ENCODE measurements at regions of chr1 and their contacts with region 1.

Region 1: GRCh38 chr1:109773146-109773899 is 9.6 kb upstream of the EPS8L3 start:
- DNase-seq: peak; percentile 79
- ATAC-seq: peak; percentile 81
- H3K4me3 ChIP-seq: no peak overlapping the region
- H3K4me3 Mint-ChIP-seq: no peak overlapping the region
- H3K27ac ChIP-seq: no peak overlapping the region
- H3K27ac Mint-ChIP-seq: no peak overlapping the region
- H3K4me1 ChIP-seq: peaks cover 0 to 11% of the 10 kb centered on the region in 2 donors
- H3K4me1 Mint-ChIP-seq: no peaks in the 10 kb centered on the region
- H3K27me3 ChIP-seq: peaks cover 0 to 8% (median 0%) of the 10 kb centered on the region in 4 experiments
- H3K27me3 Mint-ChIP-seq: peaks cover 7% of the 10 kb centered on the region
- CTCF ChIP-seq: peak; percentile 63

Region 2: DNA sequence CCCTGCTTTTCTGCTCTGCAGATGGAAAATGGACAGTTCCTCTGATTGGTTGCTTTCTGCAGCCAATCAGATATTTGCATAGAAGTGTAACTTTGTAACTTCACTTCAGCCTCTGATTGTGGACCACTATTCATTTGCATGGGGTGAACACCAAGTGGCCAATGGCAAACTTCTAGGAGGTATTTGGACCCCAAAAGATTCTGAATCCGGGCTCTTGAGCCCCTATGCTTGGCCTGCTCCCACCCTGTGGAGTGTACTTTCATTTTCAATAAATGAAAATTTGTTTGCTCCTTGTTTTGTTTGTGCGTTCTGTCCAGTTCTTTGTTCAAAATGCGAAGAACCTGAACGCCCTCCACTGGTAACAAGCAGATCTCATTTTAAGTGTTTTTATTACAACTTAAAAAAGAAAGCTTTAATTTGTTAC is 123.8 kb before region 1 on chr1:
- CTCF ChIA-PET with region 1: interaction called, 230 read pairs
- POLR2A ChIA-PET with region 1: no interaction called
- intact Hi-C with region 1: no loop called
- DNase-seq: no peak
- ATAC-seq: no peak
- H3K4me3 ChIP-seq: no peak overlapping the region
- H3K4me3 Mint-ChIP-seq: no peak overlapping the region
- H3K27ac ChIP-seq: no peak overlapping the region
- H3K27ac Mint-ChIP-seq: no peak overlapping the region
- H3K4me1 ChIP-seq: no peaks in the 10 kb centered on the region
- H3K4me1 Mint-ChIP-seq: peaks cover 3% of the 10 kb centered on the region
- H3K27me3 ChIP-seq: peaks cover 0 to 9% (median 3%) of the 10 kb centered on the region in 4 experiments
- H3K27me3 Mint-ChIP-seq: peaks cover 29% of the 10 kb centered on the region
- CTCF ChIP-seq: no peak

Region 3: DNA sequence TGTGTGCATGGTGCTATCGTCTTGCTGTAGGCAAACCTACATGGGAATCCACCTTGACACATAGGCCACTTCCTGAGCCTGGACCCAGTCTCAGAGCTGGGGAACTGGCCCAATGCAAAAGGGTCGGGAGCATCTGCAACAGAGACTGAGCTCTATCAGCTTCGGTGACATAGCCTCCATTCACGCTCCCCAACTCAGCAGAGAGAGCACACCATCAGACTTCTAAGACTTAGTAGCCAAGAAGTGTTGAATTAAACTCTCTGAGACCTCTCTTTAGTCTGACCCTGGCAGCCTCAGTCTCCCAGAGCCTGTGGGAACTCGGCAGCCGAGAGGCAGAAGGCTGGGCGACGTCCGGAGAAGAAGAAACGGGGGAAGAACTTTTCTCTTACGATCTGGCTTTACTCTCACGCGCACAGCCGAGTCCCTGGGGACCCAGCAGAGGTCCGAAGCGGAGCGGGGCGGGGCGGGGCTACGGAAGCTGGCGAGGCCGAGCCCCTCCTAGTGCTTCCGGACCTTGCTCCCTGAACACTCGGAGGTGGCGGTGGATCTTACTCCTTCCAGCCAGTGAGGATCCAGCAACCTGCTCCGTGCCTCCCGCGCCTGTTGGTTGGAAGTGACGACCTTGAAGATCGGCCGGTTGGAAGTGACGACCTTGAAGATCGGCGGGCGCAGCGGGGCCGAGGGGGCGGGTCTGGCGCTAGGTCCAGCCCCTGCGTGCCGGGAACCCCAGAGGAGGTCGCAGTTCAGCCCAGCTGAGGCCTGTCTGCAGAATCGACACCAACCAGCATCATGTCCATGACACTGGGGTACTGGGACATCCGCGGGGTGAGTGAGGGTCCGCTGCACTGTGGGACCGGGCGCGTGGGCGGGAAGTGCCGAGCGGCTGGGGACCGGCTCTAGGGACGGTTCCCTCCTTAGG is 117.5 kb before region 1 on chr1 and contains the start of gene GSTM4:
- CTCF ChIA-PET with region 1: interaction called, 29 read pairs
- POLR2A ChIA-PET with region 1: no interaction called
- intact Hi-C with region 1: no loop called
- DNase-seq: peak; percentile 90
- ATAC-seq: peak; percentile 96
- H3K4me3 ChIP-seq: peak within 1 kb of the TSS; percentile 45 to 97 (median 90)
- H3K4me3 Mint-ChIP-seq: peak within 1 kb of the TSS; percentile 96
- H3K27ac ChIP-seq: peak within 1 kb of the TSS; percentile 37 to 76
- H3K27ac Mint-ChIP-seq: peak within 1 kb of the TSS; percentile 93
- H3K4me1 ChIP-seq: peaks cover 11 to 17% of the 10 kb centered on the region in 2 donors
- H3K4me1 Mint-ChIP-seq: peaks cover 23% of the 10 kb centered on the region
- H3K27me3 ChIP-seq: peaks cover 0 to 6% (median 0%) of the 10 kb centered on the region in 4 experiments
- H3K27me3 Mint-ChIP-seq: peaks cover 20% of the 10 kb centered on the region
- CTCF ChIP-seq: no peak
- total RNA-seq, gene GSTM4: 28.6 and 39.4 TPM in 2 replicates

Region 4: GRCh38 chr1:109807822-109808680 is 34.7 kb after region 1 on chr1:
- CTCF ChIA-PET with region 1: no interaction called
- POLR2A ChIA-PET with region 1: no interaction called
- intact Hi-C with region 1: no loop called
- DNase-seq: peak; percentile 5
- ATAC-seq: no peak
- H3K4me3 ChIP-seq: no peak overlapping the region
- H3K4me3 Mint-ChIP-seq: no peak overlapping the region
- H3K27ac ChIP-seq: no peak overlapping the region
- H3K27ac Mint-ChIP-seq: no peak overlapping the region
- H3K4me1 ChIP-seq: peaks cover 14 to 22% of the 10 kb centered on the region in 2 donors
- H3K4me1 Mint-ChIP-seq: peaks cover 20% of the 10 kb centered on the region
- H3K27me3 ChIP-seq: peaks cover 0 to 10% (median 0%) of the 10 kb centered on the region in 4 experiments
- H3K27me3 Mint-ChIP-seq: peaks cover 7% of the 10 kb centered on the region
- CTCF ChIP-seq: no peak

Region 5: DNA sequence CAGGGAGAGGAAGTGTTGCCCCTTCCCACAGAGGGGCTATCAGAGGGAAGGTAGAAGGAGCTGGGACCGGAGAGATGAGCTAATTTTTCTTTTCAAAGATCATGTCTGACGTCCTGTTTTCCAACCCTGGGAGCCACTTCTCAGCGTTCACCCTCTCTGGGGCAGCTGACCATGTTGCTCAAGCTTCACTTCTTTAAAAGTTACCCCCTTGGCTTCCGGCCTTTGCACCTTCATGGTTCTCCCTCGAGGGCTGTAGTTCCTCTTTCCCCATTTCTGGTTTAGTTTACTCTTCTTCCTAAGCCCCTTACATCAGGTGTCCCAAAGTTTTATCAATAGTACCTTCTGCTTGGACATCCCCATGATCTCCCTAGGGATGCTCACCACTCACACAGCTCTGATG is 113.5 kb after region 1 on chr1:
- CTCF ChIA-PET with region 1: interaction called, 11 read pairs
- POLR2A ChIA-PET with region 1: no interaction called
- intact Hi-C with region 1: no loop called
- DNase-seq: peak; percentile 83
- ATAC-seq: peak; percentile 89
- H3K4me3 ChIP-seq: peak overlapping the region in 3 of 5 experiments; percentile 16 to 49 (median 17)
- H3K4me3 Mint-ChIP-seq: peak overlapping the region; percentile 70
- H3K27ac ChIP-seq: peak overlapping the region; percentile 74
- H3K27ac Mint-ChIP-seq: peak overlapping the region; percentile 93
- H3K4me1 ChIP-seq: peaks cover 34 to 41% of the 10 kb centered on the region in 2 donors
- H3K4me1 Mint-ChIP-seq: peaks cover 55% of the 10 kb centered on the region
- H3K27me3 ChIP-seq: peaks cover 0 to 15% (median 0%) of the 10 kb centered on the region in 4 experiments
- H3K27me3 Mint-ChIP-seq: peaks cover 7% of the 10 kb centered on the region
- CTCF ChIP-seq: no peak

Region 6: GRCh38 chr1:109993885-109994284 is 220.6 kb after region 1 on chr1:
- CTCF ChIA-PET with region 1: interaction called, 667 read pairs
- POLR2A ChIA-PET with region 1: no interaction called
- intact Hi-C with region 1: no loop called
- DNase-seq: no peak
- ATAC-seq: no peak
- H3K4me3 ChIP-seq: no peak overlapping the region
- H3K4me3 Mint-ChIP-seq: no peak overlapping the region
- H3K27ac ChIP-seq: no peak overlapping the region
- H3K27ac Mint-ChIP-seq: no peak overlapping the region
- H3K4me1 ChIP-seq: peaks cover 4 to 7% of the 10 kb centered on the region in 2 donors
- H3K4me1 Mint-ChIP-seq: peaks cover 21% of the 10 kb centered on the region
- H3K27me3 ChIP-seq: no peaks in the 10 kb centered on the region
- H3K27me3 Mint-ChIP-seq: no peaks in the 10 kb centered on the region
- CTCF ChIP-seq: no peak

Region 7: DNA sequence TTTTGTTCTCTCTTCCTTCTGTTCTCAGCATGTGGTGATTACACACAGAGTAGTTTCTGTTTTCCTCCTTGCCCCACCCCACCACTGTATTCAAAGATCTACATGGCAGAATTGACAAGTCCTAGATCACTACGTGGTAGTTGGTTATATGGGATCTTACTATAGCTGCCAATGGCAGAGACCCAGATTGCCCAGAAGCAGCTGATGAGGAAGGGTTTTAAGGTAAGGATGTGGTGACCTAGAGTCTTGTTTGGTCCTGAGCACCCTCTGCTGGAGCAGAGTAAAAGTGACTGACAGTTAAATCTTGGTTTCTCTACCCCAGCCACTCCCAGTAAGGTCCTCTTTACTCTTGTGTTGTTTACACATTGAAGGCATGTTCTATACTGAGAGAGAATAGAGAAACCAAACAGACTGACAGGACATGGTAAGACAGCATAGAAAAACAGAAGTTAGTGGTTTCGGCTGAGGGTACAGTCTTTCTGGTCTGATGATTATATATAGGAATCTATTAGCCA is 238.3 kb after region 1 on chr1:
- CTCF ChIA-PET with region 1: interaction called, 87 read pairs
- POLR2A ChIA-PET with region 1: no interaction called
- intact Hi-C with region 1: loop called (anchors 1 kb)
- DNase-seq: peak; percentile 92
- ATAC-seq: peak; percentile 93
- H3K4me3 ChIP-seq: peak overlapping the region in 3 of 5 experiments; percentile 29 to 37 (median 34)
- H3K4me3 Mint-ChIP-seq: peak overlapping the region; percentile 82
- H3K27ac ChIP-seq: peak overlapping the region; percentile 93 to 94
- H3K27ac Mint-ChIP-seq: peak overlapping the region; percentile 98
- H3K4me1 ChIP-seq: peaks cover 25 to 27% of the 10 kb centered on the region in 2 donors
- H3K4me1 Mint-ChIP-seq: peaks cover 33% of the 10 kb centered on the region
- H3K27me3 ChIP-seq: no peaks in the 10 kb centered on the region
- H3K27me3 Mint-ChIP-seq: no peaks in the 10 kb centered on the region
- CTCF ChIP-seq: peak; percentile 79

Measured in B cell (primary cell).